A549 (cell line): ENCODE measurements at regions of chr11 and their contacts with region 1.

Region 1: DNA sequence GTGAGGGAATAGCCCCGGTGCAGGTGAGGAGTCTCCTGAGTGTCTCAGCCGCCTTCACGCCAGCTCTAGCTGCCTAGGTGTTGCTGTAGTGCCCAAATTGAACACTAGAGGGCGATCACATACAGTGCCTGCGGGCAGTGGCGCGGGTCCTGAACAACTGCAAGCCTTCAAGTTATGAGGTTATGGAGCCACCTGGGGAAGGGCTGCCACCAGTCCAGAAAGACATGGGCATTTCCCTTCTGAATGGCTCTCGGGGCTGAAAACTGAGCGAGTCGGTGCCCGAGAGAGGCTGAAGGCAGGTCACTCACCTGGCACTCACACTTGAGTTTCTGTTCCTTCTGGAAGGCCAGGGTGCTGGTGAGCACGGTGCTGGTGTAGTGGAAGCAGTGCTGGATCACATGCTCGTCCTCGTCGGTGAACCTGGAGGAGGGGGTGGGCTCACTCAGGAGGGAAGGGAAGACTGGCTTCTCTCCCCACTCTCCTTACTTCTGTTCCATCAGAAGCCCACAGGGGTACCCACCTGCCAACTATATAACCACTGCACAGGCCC is 88.4 kb downstream of the PDE2A start:
- DNase-seq: peak; percentile 64 to 77
- ATAC-seq: peak; percentile 27 to 75; a peak in 3 of 6 replicates
- H3K4me3 ChIP-seq: no peak overlapping the region
- H3K27ac ChIP-seq: no peak overlapping the region
- H3K4me1 ChIP-seq: 0 out of 3 replicates have a peak, but pooled peaks cover 6% of the 10 kb centered on the region
- CTCF ChIP-seq: peak; percentile 87
- EP300 ChIP-seq: no peak
- POLR2A ChIP-seq: no peak
- RAD21 ChIP-seq: peak; percentile 69 to 72

Region 2: GRCh38 chr11:72573072-72573854 is 12.6 kb before region 1 on chr11:
- CTCF ChIA-PET with region 1: interaction called, 54 read pairs
- POLR2A ChIA-PET with region 1: no interaction called
- DNase-seq: peak; percentile 47 to 67
- ATAC-seq: peak; percentile 85 to 94
- H3K4me3 ChIP-seq: no peak overlapping the region
- H3K27ac ChIP-seq: no peak overlapping the region
- H3K4me1 ChIP-seq: peaks cover 3% of the 10 kb centered on the region; the same call in 1 of the 3 replicates
- CTCF ChIP-seq: peak; percentile 59
- EP300 ChIP-seq: no peak
- POLR2A ChIP-seq: no peak
- RAD21 ChIP-seq: peak; percentile 68 to 74

Region 3: GRCh38 chr11:72631806-72632731 is 46.2 kb after region 1 on chr11:
- CTCF ChIA-PET with region 1: interaction called, 171 read pairs
- POLR2A ChIA-PET with region 1: no interaction called
- DNase-seq: no peak
- ATAC-seq: no peak
- H3K4me3 ChIP-seq: no peak overlapping the region
- H3K27ac ChIP-seq: no peak overlapping the region
- H3K4me1 ChIP-seq: peaks cover under 1% of the 10 kb centered on the region; the same call in 1 of the 3 replicates
- CTCF ChIP-seq: no peak
- EP300 ChIP-seq: no peak
- POLR2A ChIP-seq: no peak
- RAD21 ChIP-seq: no peak

Region 4: GRCh38 chr11:72642884-72643511 is 57.2 kb after region 1 on chr11:
- CTCF ChIA-PET with region 1: interaction called, 171 read pairs
- POLR2A ChIA-PET with region 1: interaction called, 3 read pairs
- DNase-seq: peak; percentile 65 to 80
- ATAC-seq: peak; percentile 59 to 86
- H3K4me3 ChIP-seq: peak overlapping the region; percentile 68
- H3K27ac ChIP-seq: peak overlapping the region; percentile 58 to 91
- H3K4me1 ChIP-seq: peaks cover 16% of the 10 kb centered on the region
- CTCF ChIP-seq: peak; percentile 96
- EP300 ChIP-seq: no peak
- POLR2A ChIP-seq: no peak
- RAD21 ChIP-seq: peak; percentile 64 to 88

Region 5: DNA sequence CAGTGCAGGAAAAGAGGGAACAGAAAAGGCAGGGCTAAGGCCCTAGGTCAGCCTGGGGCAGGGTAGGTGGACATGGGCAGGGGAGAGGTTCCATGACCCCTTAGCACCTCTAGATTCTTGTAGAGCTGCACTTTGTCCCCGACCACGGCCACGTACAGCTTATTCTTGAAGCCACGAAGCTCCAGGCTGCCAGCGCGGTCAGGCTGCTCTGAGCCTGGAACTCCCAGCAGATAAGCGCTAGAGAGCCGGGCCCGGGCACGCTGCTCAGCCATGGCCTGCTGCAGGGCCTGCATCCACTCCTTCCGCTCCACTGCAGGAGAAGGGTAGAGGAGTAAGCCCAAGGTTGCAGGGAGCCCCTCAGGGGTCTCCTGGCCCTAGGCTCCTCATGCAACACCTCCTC is 124.4 kb after region 1 on chr11:
- CTCF ChIA-PET with region 1: no interaction called
- POLR2A ChIA-PET with region 1: no interaction called
- DNase-seq: no peak
- ATAC-seq: no peak
- H3K4me3 ChIP-seq: no peak overlapping the region
- H3K27ac ChIP-seq: no peak overlapping the region
- H3K4me1 ChIP-seq: no peaks in the 10 kb centered on the region
- CTCF ChIP-seq: no peak
- EP300 ChIP-seq: no peak
- POLR2A ChIP-seq: no peak
- RAD21 ChIP-seq: no peak